Colonic mucosa (tissue), 4 donors: ENCODE measurements at regions of chr12 and their contacts with region 1.

Region 1: DNA sequence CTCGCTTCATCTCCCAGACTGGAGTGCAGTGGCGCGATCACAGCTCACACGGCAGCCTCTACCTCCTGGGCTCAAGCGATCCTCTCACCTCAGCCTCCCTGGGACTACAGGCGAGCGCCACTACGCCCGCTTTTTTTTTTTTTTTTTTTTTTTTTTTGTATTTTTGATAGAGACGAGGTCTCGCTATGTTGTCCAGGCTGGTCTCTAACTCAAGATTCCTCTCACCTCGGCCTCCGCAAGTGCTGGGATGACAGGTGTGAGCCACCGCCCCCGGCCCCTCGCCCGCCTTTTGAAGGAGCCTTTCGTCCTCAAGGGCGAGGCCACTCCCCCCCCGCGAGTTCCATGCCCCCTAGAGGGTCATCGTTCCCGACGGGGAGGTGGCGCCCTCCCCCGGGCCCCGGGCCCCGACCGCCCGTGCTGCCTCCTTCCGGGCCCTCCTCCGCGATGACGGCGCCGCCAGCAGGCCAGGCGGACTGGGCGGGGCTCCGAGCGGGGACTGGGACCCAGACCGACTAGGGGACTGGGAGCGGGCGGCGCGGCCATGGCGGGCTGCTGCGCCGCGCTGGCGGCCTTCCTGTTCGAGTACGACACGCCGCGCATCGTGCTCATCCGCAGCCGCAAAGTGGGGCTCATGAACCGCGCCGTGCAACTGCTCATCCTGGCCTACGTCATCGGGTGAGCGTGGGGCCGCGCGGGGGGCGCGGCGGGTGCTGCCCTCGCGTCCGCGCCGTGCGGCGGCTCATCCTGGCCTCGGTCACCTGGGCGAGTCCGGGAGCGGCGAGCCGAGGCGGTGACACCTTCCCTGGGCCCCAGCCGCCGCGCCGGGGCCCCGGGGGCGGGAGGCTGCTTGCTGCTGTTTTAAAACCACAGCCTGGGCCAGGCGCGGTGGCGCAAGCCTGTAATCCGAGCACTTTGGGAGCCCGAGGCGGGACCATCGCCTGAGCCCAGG is at the start of gene P2RX4:
- DNase-seq: peak; percentile 90
- H3K4me3 ChIP-seq: peak within 1 kb of the TSS; percentile 69
- H3K27ac ChIP-seq: peak within 1 kb of the TSS; percentile 91
- H3K4me1 ChIP-seq: peaks cover 9% of the 10 kb centered on the region
- H3K27me3 ChIP-seq: no peaks in the 10 kb centered on the region
- CTCF ChIP-seq: no peak
- total RNA-seq, gene P2RX4: 82.2 to 123 TPM

Region 2: DNA sequence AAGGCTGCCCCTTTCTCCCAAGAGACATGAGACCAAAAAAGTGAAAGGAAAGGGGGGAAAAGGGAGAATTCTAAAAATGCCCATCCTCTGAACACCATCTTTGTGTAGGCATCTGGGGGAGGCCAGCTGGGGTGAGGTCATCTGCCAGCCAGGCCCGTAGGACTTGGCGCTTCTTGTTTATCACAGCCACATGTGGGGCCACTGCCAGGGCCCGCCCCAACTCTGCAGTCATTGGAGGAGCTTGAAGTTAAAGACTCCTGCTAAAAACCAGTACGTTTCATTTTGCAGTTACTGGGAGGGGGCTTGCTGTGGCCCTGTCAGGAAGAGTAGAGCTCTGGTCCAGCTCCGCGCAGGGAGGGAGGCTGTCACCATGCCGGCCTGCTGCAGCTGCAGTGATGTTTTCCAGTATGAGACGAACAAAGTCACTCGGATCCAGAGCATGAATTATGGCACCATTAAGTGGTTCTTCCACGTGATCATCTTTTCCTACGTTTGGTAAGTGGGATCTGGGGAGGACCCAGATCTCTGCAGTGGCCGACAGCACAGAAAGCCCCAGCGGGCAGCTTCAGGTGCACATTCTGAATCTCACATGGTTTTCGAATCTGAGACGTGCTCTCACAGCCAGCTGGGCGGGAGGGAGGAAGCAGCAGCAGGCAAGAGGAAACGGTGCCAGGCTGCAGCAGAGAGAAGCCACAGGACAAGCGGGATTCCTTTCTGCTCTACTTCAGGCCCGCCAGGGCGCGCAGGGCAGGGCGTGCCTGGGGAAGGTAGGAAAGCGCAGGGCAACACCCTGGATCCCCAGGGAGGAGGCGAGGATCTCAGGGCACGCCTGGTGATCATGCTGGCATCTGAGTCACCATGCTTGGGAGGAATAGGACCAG is 77.1 kb before region 1 on chr12 and contains the start of gene P2RX7:
- intact Hi-C with region 1: loop called (anchors 5 kb)
- DNase-seq: peak; percentile 81
- H3K4me3 ChIP-seq: peak within 1 kb of the TSS; percentile 32
- H3K27ac ChIP-seq: peak within 1 kb of the TSS; percentile 39
- H3K4me1 ChIP-seq: peaks cover 8% of the 10 kb centered on the region
- H3K27me3 ChIP-seq: no peaks in the 10 kb centered on the region
- CTCF ChIP-seq: no peak
- total RNA-seq, gene P2RX7: 0.62 to 1.7 TPM